ENCODE measurements at regions of chr13 and their contacts with region 1.

Region 1: DNA sequence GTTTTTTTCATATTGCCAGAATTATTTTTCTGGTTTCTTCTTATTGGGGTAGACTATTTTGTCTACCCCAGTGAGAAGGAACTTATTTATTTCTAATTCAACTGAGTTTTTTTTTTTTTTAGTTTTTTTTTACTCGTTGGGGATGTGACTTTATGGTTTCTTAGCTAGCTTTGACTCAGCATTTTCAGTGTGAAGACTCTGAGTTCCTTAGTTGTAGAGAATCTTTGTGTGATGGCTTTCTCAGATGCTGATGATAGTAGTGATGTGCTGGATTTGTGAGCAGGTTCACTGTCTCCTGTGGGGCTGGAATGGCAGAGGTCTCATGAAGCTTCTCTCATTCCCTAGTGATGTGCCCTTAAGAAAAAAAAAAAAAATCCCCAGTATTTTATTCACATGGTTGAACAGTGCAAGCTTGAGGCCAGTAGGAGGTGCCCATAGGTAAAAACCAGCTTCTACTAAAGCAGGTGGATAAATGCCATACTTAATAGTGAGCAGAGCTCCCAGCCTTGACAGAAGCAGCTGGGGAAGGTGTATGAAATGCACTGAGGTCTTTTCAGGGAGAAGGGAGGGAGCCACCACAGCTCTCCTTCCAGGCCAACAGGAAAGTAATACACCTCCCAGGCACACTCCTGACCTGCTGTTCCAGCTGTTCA is 106.2 kb upstream of the KLF5 start:
- DNase-seq: no peak
- ATAC-seq: peak; percentile 60
- H3K4me3 ChIP-seq: no peak overlapping the region
- H3K27ac ChIP-seq: no peak overlapping the region
- H3K4me1 ChIP-seq: no peaks in the 10 kb centered on the region
- H3K27me3 ChIP-seq: no peaks in the 10 kb centered on the region
- CTCF ChIP-seq: no peak

Region 2: GRCh38 chr13:72727417-72728289 is 225.0 kb before region 1 on chr13 and contains the starts of genes BORA and MZT1:
- intact Hi-C with region 1: no loop called
- DNase-seq: peak; percentile 92 to 99 (median 96)
- ATAC-seq: peak; percentile 99
- H3K4me3 ChIP-seq: peak within 1 kb of the TSS; percentile 78 to 96
- H3K27ac ChIP-seq: peak within 1 kb of the TSS; percentile 51 to 79
- H3K4me1 ChIP-seq: peaks cover 6 to 27% of the 10 kb centered on the region in 2 donors
- H3K27me3 ChIP-seq: no peaks in the 10 kb centered on the region
- CTCF ChIP-seq: no peak
- polyA plus RNA-seq, gene BORA: 9.2 to 16.7 (median 10.5) TPM
- polyA plus RNA-seq, gene MZT1: 16.0 to 22.3 (median 20.2) TPM

Region 3: GRCh38 chr13:72890546-72890945 is 62.1 kb before region 1 on chr13:
- intact Hi-C with region 1: loop called in 1 of 2 experiments (anchors 10 kb)
- DNase-seq: no peak
- ATAC-seq: no peak
- H3K4me3 ChIP-seq: no peak overlapping the region
- H3K27ac ChIP-seq: no peak overlapping the region
- H3K4me1 ChIP-seq: no peaks in the 10 kb centered on the region
- H3K27me3 ChIP-seq: no peaks in the 10 kb centered on the region
- CTCF ChIP-seq: no peak

Region 4: GRCh38 chr13:74103970-74104555 is 1151.4 kb after region 1 on chr13:
- intact Hi-C with region 1: no loop called
- DNase-seq: no peak
- ATAC-seq: no peak
- H3K4me3 ChIP-seq: no peak overlapping the region
- H3K27ac ChIP-seq: no peak overlapping the region
- H3K4me1 ChIP-seq: no peaks in the 10 kb centered on the region
- H3K27me3 ChIP-seq: no peaks in the 10 kb centered on the region
- CTCF ChIP-seq: no peak